AG04449 (cell line): ENCODE measurements at regions of chr19 and their contacts with region 1.

Region 1: GRCh38 chr19:17859533-17860330 is at the start of gene RPL18A:
- DNase-seq: peak; percentile 98
- H3K4me3 ChIP-seq: peak within 1 kb of the TSS; percentile 92
- CTCF ChIP-seq: peak; percentile 91

Region 2: GRCh38 chr19:17703824-17704463 is 155.8 kb before region 1 on chr19:
- CTCF ChIA-PET with region 1: interaction called, 12 read pairs
- POLR2A ChIA-PET with region 1: no interaction called
- DNase-seq: no peak
- H3K4me3 ChIP-seq: no peak overlapping the region
- CTCF ChIP-seq: peak; percentile 61

Region 3: DNA sequence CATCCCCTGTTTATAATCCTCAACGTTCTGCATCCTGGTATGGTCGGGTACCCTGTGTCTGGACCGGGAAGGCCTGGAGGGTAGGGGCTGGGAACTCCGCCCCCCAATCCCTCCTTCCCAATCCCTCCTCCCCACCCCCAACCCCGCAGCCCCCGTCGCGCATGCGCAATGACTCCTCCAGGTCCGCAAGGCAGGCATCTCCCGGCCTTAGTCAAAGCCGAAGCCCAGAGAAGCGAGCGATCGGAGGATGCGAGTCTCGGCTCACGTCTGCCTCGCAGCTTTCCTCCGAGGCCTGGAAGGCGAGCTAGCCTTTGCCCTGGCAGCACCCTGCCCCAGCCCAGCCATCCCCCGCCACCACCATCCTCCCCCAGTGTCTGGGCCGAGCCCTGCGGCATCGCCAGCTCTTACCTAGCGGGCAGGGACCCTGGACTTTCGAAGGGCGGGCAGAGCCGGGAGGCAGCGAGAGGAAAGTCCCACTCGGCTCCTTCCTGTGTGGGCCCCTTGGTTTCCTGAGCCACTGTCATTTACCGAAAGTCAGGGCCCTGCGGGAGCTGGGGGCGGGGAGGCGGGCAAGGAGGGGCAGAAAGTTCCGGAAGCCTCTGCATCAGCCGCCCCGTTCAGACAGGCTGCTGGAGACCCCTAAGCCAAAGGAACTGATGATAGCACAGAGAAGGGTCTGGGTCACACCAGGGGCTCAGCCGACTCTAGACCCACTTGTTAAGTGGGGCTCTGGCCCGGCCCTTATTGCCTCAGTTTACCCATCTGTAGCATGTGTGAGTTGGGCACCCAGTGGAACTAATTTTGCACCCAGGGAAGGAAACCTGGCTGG is 12.0 kb before region 1 on chr19 and contains the start of gene JAK3:
- CTCF ChIA-PET with region 1: interaction called, 33 read pairs
- POLR2A ChIA-PET with region 1: interaction called, 10 read pairs
- DNase-seq: no peak
- H3K4me3 ChIP-seq: peak within 1 kb of the TSS; percentile 55
- CTCF ChIP-seq: no peak

Region 4: DNA sequence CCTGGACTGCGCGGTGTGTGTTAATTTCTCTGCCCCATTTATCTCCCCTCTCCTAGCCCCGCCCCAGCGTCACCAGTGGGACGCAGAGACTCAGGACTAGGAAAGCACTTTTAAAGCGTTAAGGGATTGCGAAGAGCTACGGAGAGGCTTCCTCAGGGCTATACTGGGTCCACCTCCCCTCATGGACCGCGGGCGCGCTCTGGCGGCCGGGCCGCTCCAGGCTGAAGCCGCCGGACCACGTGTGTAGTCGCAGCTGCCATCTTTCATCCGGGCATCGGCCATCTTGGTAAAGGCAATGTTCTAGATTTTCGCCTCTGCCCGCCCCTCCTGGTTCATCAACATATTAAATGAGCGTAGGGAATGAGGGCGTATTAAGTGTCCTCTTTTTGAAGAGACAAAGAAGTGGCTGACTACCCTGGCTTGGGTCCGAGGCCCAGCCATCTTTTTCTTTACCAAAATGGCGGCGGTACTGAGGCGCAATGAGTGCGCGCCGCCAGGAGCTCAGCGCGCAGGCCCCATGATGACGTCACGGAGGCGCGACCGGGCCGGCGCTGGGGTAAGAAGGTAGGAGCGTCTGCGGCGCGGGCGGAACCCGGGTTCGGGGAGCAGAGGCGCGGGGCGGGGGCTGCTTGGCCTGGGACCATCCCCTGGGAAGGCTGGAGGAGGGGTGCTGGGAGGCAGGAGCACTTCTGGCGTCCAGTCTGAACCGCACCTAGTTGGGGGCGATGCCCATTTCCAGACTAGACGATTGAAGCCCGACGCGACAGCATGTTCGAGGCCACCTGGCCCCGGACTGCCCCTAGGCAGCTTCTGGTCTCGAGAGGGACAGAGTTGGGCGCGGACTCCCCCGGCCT is 73.0 kb after region 1 on chr19 and contains the start of gene CCDC124:
- CTCF ChIA-PET with region 1: interaction called, 73 read pairs
- POLR2A ChIA-PET with region 1: interaction called, 16 read pairs
- DNase-seq: peak; percentile 38
- H3K4me3 ChIP-seq: peak within 1 kb of the TSS; percentile 84
- CTCF ChIP-seq: peak; percentile 97

Region 5: DNA sequence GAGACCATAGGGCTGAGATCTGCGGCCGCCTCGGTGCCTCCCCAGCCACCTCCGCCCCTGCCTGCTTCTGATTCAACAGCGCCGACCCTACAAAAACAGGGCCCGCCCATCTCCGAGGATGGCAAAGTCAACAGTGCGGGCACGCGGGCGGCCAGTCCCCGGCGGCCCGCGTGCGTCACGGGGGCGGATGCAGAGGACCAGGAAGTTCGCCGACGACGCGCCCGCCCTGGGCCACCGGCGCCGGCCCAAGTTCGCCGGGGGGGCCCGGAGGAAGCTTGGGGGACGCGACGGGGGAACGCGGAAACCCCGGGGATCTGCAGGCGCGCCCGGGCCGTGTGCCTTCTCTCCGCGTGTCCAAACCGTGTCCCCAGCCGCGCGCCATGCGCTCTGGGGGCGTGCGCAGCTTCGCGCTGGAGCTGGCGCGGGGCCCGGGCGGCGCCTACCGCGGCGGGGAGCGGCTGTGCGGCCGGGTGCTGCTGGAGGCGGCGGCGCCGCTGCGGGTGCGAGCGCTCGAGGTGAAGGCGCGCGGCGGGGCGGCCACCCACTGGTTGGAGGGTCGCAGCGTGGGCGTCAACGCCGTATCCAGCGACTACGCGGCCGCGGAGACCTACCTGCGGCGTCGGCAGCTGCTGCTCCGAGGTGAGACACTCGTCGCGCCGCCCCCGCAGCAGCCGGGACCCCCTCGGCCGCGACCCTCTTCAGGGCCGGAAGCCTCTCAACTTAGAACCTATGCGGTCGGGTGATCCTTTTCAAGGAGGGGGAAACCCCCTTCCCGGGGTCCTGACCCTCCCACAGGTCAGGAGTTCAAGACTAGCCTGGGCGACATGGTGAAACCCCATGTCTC is 141.4 kb after region 1 on chr19:
- CTCF ChIA-PET with region 1: interaction called, 41 read pairs
- POLR2A ChIA-PET with region 1: no interaction called
- DNase-seq: no peak
- H3K4me3 ChIP-seq: peak overlapping the region; percentile 69
- CTCF ChIP-seq: no peak